ENCODE measurements at regions of chr5 and their contacts with region 1.

Region 1: GRCh38 chr5:14545308-14545707 is 36.3 kb upstream of the OTULINL start:
- DNase-seq: no peak
- ATAC-seq: no peak
- H3K4me3 ChIP-seq: no peak overlapping the region
- H3K27ac ChIP-seq: no peak overlapping the region
- H3K4me1 ChIP-seq: no peaks in the 10 kb centered on the region
- H3K27me3 ChIP-seq: no peaks in the 10 kb centered on the region; a peak in 1 of 5 replicates
- CTCF ChIP-seq: no peak
- EP300 ChIP-seq: no peak
- POLR2A ChIP-seq: no peak
- RAD21 ChIP-seq: no peak

Region 2: DNA sequence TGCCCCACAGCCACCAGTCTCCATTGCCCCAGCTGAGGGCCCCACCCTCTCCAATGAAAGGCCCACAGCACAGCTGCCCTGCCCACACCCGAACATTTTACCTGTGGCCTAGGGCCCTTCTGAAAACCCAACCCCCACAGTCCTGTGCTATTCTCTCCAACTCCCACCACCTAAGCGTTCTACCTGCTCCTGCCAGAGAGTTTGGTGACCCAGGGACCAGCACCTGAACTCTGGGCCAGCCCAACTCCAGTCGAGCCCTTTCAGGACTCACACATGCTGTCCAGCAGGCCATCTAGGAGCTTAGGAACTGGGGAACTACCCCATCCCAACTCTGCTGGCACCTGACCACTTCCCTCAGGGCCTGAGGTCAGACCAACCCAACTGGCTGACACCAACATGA is 1163.1 kb before region 1 on chr5:
- CTCF ChIA-PET with region 1: no interaction called
- POLR2A ChIA-PET with region 1: no interaction called
- in situ Hi-C with region 1: no loop called
- intact Hi-C with region 1: no loop called
- DNase-seq: no peak
- ATAC-seq: no peak
- H3K4me3 ChIP-seq: no peak overlapping the region
- H3K27ac ChIP-seq: no peak overlapping the region
- H3K4me1 ChIP-seq: no peaks in the 10 kb centered on the region
- H3K27me3 ChIP-seq: no peaks in the 10 kb centered on the region
- CTCF ChIP-seq: no peak
- EP300 ChIP-seq: no peak
- POLR2A ChIP-seq: no peak
- RAD21 ChIP-seq: no peak

Region 3: DNA sequence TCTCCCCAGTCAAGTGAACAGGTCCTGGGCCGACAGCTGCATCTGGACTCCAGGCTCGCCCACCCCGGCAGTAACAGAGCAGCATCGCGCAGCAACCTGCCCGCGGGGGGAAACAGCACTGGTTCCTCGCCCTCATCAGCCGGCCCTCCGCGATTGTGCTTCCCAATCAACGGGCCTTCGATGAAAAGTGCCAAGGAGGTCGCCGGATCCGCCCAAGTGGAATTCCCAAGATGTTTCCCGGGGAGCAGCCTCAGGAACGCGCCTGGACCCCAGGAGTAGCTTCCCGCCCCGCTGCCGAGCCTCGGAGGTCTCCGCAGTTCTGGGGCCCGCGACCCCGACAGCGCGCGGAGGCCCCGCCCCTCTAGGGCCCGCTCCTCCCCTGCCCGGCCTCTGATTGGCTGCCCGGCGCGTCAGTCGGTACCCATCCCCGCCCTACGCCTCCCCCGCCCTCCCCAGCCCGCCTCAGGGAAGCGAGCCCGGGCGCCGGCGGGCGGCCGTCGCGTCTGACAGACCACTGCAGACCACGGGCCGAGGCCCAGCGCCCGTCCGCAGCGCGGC is 36.1 kb after region 1 on chr5 and contains the start of gene OTULINL:
- CTCF ChIA-PET with region 1: no interaction called
- POLR2A ChIA-PET with region 1: no interaction called
- in situ Hi-C with region 1: no loop called
- intact Hi-C with region 1: loop called (anchors 1 kb)
- DNase-seq: peak; percentile 24
- ATAC-seq: peak; percentile 95
- H3K4me3 ChIP-seq: peak within 1 kb of the TSS; percentile 52 to 71 (median 53); a peak in 5 of 6 replicates
- H3K27ac ChIP-seq: no peak within 1 kb of the TSS
- H3K4me1 ChIP-seq: peaks cover 21% of the 10 kb centered on the region
- H3K27me3 ChIP-seq: peaks cover 7 to 60% of the 10 kb centered on the region in 2 experiments
- CTCF ChIP-seq: no peak
- EP300 ChIP-seq: no peak
- POLR2A ChIP-seq: no peak
- RAD21 ChIP-seq: no peak
- total RNA-seq, gene OTULINL: 0.36 and 0.40 TPM in 2 replicates

Measured in HepG2 (cell line).